Activated CD4-positive, alpha-beta memory T cell treated with anti-CD3 and anti-CD28 coated beads for 36 hours (primary cell): ENCODE measurements at regions of chr15 and their contacts with region 1.

Region 1: DNA sequence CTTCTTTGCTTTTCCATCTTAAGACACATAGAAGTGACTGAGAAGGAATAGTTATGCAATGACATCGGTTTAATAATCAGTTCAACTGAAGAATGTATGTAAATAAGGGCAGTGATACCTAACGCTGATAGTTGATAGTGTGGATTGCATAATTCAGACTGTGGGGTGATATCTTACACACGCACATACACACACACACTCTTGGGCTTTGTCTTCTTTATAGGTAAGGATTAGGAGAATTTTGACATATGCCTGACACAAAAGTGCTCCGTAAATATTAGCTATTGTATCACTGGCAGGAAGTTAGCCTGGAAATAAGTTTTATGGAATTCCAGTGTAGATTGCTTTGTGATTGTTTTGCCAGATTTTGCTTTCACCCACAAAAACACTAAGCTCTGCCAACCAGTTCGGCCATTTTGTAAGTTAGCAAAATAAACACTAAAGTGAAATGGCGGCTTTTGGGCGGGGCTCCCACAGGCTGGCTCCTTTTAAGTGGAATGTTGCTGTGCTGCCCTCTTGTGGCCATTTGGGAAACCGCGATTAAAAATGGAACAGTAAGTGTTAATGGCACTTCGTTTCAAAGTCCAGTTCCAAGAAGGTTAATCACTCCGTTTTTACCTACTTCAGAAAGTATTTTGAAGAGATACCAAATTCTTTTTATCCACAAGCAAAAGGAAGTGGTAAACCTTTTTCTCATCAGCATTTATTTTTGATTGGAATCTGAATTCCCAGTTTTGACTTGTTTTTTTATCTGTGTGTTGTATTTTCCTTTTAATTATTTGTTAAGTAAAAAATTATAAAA is 17.7 kb downstream of the CHD2 start:
- DNase-seq: peak; percentile 96
- H3K4me3 Mint-ChIP-seq: peak overlapping the region; percentile 31
- H3K27ac Mint-ChIP-seq: peak overlapping the region; percentile 87
- H3K4me1 Mint-ChIP-seq: peaks cover 85% of the 10 kb centered on the region
- H3K27me3 Mint-ChIP-seq: no peaks in the 10 kb centered on the region

Region 2: GRCh38 chr15:92797168-92797951 is 120.4 kb before region 1 on chr15:
- CTCF ChIA-PET with region 1: interaction called, 78 read pairs
- POLR2A ChIA-PET with region 1: interaction called, 5 read pairs
- intact Hi-C with region 1: loop called (anchors 1 kb)
- DNase-seq: no peak
- H3K4me3 Mint-ChIP-seq: no peak overlapping the region
- H3K27ac Mint-ChIP-seq: peak overlapping the region; percentile 69
- H3K4me1 Mint-ChIP-seq: peaks cover 9% of the 10 kb centered on the region
- H3K27me3 Mint-ChIP-seq: no peaks in the 10 kb centered on the region

Region 3: GRCh38 chr15:92831655-92832328 is 86.0 kb before region 1 on chr15:
- CTCF ChIA-PET with region 1: interaction called, 9 read pairs
- POLR2A ChIA-PET with region 1: interaction called, 13 read pairs
- intact Hi-C with region 1: no loop called
- DNase-seq: peak; percentile 95
- H3K4me3 Mint-ChIP-seq: peak overlapping the region; percentile 70
- H3K27ac Mint-ChIP-seq: peak overlapping the region; percentile 99
- H3K4me1 Mint-ChIP-seq: peaks cover 52% of the 10 kb centered on the region
- H3K27me3 Mint-ChIP-seq: peaks cover 2% of the 10 kb centered on the region

Region 4: GRCh38 chr15:92889390-92890107 is 28.3 kb before region 1 on chr15:
- CTCF ChIA-PET with region 1: interaction called, 10 read pairs
- POLR2A ChIA-PET with region 1: interaction called, 72 read pairs
- intact Hi-C with region 1: loop called (anchors 1 kb)
- DNase-seq: no peak
- H3K4me3 Mint-ChIP-seq: peak overlapping the region; percentile 61
- H3K27ac Mint-ChIP-seq: peak overlapping the region; percentile 86
- H3K4me1 Mint-ChIP-seq: peaks cover 66% of the 10 kb centered on the region
- H3K27me3 Mint-ChIP-seq: no peaks in the 10 kb centered on the region

Region 5: DNA sequence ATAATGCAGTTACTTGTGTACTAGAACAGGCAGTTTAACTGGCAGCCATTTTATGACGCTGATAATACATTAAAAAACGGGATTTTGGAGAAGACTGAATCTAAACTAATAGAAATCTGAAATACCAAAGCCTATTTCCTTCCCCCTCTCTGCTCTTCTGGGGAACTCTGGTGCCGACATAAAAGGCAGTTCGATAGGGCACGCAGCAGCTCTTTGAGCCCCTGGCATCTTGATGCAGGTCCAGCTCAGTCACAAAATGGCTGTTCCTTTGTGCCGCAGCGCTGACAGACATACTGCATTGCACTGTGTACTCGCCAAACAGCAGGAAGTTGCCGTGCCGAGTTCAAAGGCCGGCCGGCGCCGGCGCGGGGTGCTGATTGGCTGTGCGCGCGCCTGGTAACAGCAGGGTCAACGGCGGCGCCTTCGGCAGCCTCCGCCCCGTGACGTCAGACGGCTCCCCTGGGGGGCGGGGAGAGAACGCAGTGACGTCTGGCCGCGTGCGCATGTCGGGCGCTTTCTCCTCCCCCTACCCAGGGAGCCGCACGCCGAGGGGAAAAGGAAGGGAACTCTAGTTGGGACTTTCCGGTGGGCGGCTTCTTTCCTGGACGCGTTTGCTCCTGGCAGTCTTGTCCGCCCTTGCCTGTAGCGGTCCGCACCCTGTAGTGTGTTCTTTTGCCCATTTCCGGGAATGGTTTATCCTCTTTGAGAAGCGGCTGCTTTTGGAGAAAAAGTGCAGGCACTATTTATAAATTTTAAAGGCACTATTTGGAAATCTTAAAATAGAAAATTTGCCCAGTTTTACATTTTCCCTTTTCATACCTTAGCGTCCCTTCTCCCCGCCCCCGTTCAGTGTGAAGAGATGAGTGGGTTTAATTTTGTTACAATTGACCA is 13.6 kb before region 1 on chr15:
- CTCF ChIA-PET with region 1: interaction called, 51 read pairs
- POLR2A ChIA-PET with region 1: interaction called, 57 read pairs
- intact Hi-C with region 1: loop called (anchors 1 kb)
- DNase-seq: peak; percentile 100
- H3K4me3 Mint-ChIP-seq: peak overlapping the region; percentile 97
- H3K27ac Mint-ChIP-seq: peak overlapping the region; percentile 100
- H3K4me1 Mint-ChIP-seq: peaks cover 55% of the 10 kb centered on the region
- H3K27me3 Mint-ChIP-seq: peaks cover 3% of the 10 kb centered on the region

Region 6: GRCh38 chr15:92938387-92938786 is 20.6 kb after region 1 on chr15:
- CTCF ChIA-PET with region 1: interaction called, 3 read pairs
- POLR2A ChIA-PET with region 1: interaction called, 5 read pairs
- intact Hi-C with region 1: loop called (anchors 2 kb)
- DNase-seq: no peak
- H3K4me3 Mint-ChIP-seq: no peak overlapping the region
- H3K27ac Mint-ChIP-seq: peak overlapping the region; percentile 33
- H3K4me1 Mint-ChIP-seq: peaks cover 69% of the 10 kb centered on the region
- H3K27me3 Mint-ChIP-seq: no peaks in the 10 kb centered on the region